ENCODE measurements at regions of chr3 and their contacts with region 1.

Region 1: DNA sequence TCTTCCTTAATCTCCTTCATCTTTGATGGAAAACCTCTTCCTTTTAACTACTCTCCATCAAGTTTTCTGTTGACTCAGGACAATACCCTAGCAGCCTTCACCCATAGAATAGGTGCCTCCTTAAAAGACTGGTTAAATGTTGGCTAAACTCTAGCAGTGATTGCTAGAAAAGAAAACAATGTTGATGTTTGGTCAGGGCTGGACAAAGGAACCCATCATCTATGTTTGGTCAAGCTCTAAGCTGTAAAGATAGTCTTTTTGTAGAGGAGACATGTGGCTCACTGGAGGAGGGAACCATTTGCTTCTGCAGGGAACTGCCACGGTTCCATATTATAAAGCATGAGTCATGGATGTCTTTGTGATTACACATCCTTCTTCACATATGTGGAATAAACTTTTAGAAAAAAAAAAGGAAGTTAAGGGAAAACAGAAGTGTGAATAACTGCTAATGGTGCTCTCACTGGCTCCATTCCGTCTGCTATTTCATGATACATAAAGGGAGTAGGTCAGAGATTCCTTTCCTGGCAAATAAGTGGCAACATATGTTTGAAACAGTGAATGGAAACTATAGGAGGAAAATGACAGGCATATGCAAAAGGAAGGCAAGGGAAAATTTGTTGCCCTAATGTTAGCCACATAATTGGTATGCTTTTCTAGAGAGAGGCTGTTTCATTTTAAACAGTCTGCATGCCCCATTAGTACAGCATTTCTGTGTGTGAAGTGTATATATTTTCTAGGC is 78.2 kb downstream of the CMSS1 start:
- DNase-seq: peak; percentile 35 to 82
- H3K4me3 ChIP-seq: no peak overlapping the region
- H3K27ac ChIP-seq: peak overlapping the region; percentile 55
- H3K4me1 ChIP-seq: peaks cover 33% of the 10 kb centered on the region
- H3K27me3 ChIP-seq: no peaks in the 10 kb centered on the region
- CTCF ChIP-seq: no peak

Region 2: DNA sequence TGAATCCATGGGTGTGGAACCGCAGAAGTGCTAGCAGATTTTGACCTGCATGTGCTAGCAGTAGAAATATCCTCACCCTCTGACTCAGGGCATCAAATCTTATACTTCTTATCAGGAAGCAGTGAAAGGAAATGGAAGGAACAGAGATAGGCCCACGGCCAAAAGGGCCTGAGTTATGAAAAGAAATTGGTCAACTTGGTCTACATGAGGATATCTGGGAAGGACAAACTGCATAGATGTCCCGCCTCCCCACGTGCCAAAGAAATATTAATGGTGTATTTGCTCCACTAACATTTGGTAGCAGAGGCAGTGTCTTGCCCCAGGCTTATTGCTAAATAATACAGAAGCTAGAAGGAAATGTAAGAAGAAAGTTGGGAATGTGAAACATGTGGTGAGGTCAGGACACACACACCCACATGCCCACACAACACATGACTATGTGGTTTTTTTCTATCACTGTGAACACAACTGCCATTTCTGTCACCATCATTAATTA is 351.0 kb before region 1 on chr3:
- CTCF ChIA-PET with region 1: no interaction called
- POLR2A ChIA-PET with region 1: no interaction called
- intact Hi-C with region 1: no loop called
- DNase-seq: peak in 1 of 2 experiments; percentile 19
- H3K4me3 ChIP-seq: no peak overlapping the region
- H3K27ac ChIP-seq: no peak overlapping the region
- H3K4me1 ChIP-seq: peaks cover 28% of the 10 kb centered on the region
- H3K27me3 ChIP-seq: no peaks in the 10 kb centered on the region
- CTCF ChIP-seq: no peak

Region 3: GRCh38 chr3:99884484-99884883 is 11.4 kb before region 1 on chr3:
- CTCF ChIA-PET with region 1: interaction called, 11 read pairs
- POLR2A ChIA-PET with region 1: interaction called, 6 read pairs
- intact Hi-C with region 1: no loop called
- DNase-seq: peak; percentile 25 to 66
- H3K4me3 ChIP-seq: no peak overlapping the region
- H3K27ac ChIP-seq: no peak overlapping the region
- H3K4me1 ChIP-seq: no peaks in the 10 kb centered on the region
- H3K27me3 ChIP-seq: no peaks in the 10 kb centered on the region
- CTCF ChIP-seq: no peak

Region 4: DNA sequence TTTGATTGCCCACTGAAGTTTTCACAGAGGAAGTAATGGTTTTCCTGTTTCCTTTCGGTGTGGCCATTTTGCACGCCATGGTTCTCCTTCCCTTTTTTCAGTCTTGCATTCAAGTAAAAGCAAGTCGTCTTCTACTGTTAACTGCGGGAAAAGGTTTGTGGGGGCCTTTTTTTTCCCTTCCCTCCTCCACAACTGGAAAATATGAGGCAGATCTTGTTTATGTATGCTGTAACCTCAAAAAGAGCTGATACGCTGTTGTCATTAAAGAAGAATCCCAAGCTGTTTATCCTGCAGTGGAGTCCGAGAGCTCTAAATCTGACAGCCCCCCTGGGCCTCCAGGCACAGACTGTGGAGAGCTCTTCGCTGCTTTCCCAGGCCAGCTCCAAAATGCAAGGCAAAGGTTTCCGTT is 178.0 kb after region 1 on chr3:
- CTCF ChIA-PET with region 1: no interaction called
- POLR2A ChIA-PET with region 1: interaction called, 11 read pairs
- intact Hi-C with region 1: no loop called
- DNase-seq: no peak
- H3K4me3 ChIP-seq: no peak overlapping the region
- H3K27ac ChIP-seq: no peak overlapping the region
- H3K4me1 ChIP-seq: no peaks in the 10 kb centered on the region
- H3K27me3 ChIP-seq: no peaks in the 10 kb centered on the region
- CTCF ChIP-seq: no peak

Region 5: DNA sequence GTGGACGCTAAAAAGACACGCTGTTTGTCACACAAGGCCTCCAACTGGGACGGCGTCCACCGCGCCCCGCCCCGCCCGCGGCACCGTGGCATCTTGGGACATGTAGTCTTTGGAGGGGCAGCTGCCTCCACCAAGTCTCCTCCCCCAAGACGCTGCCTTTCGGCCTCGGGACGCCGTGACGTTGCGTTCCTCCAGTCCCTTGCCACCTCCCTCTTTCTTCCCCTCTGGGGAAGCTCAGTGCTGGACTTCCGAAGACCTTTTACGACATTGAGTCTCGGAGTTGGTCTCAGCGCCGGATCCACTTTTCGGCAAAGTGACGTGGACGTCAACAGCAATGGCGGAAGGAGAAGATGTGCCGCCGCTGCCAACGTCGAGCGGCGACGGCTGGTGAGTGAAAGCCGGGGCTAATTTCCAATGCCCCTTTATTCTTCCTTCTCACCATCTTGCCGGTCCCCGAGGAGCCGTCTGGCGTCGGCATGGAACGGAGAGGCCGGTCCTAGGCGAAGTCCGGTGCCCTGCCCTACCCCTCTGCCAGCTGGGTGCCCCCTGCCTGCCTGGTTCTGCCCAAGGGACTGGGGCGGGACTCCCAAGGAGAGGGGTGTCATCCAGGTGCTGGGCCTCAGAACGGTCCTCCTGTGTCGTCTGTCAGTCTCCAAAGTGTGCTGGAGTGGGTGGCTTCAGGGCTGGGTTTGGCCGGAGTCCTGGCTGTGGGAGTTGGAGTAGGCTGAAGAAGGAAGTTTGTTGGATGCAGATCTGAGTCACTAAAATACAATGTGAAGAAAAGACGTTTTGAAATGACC is 365.0 kb after region 1 on chr3 and contains the start of gene TBC1D23:
- CTCF ChIA-PET with region 1: no interaction called
- POLR2A ChIA-PET with region 1: no interaction called
- intact Hi-C with region 1: loop called (anchors 5 kb)
- DNase-seq: peak; percentile 100
- H3K4me3 ChIP-seq: peak within 1 kb of the TSS; percentile 78
- H3K27ac ChIP-seq: peak within 1 kb of the TSS; percentile 89
- H3K4me1 ChIP-seq: peaks cover 51% of the 10 kb centered on the region
- H3K27me3 ChIP-seq: no peaks in the 10 kb centered on the region
- CTCF ChIP-seq: 0 out of 2 replicates have a peak, but pooled peaks have one; percentile 14
- total RNA-seq, gene TBC1D23: 68.0 and 68.7 TPM in 2 replicates

Measured in PC-9 (cell line).